ENCODE measurements at regions of chr6 and their contacts with region 1.

Region 1: GRCh38 chr6:56451165-56451739 is 191.4 kb downstream of the DST start:
- DNase-seq: peak in 1 of 3 donors; percentile 6
- ATAC-seq: no peak
- H3K4me3 ChIP-seq: no peak overlapping the region
- H3K4me1 ChIP-seq: no peaks in the 10 kb centered on the region
- CTCF ChIP-seq: no peak

Region 2: DNA sequence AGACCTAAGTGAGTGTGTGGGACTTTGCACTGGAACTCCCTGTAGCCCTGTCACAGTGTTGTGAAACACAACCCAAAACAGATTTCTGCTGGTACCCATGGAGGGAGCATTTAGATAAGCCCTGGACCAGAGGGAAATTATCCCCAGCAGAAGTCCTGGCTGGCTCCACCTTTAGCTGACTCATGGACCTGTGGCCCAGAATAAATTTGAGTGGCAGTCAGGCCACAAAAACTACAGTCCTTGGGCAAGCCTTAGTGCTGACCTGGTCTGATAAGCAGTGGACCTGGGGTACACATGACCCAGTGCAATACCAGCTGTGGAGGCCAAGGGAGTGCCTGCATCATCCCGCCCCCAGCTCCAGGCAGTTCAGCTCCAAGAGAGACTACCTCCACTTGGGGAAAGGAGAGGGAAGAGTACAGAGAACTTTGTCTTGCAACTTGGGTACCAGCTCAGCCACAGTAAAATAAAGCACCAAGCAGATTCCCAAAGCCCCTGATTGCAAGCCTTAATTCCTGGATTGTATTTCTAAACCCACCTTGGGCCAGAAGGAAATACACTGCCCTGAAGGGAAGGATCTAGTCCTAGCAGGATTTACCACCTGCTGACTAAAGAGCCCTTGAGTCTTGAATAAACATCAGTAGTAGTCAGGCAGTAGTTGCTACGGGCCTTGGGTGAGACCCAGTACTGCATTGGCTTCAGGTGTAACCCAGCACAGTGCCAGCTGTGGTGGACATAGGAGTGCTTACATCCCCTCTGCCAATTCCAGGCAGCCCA is 63.4 kb before region 1 on chr6:
- intact Hi-C with region 1: loop called in 1 of 2 experiments (anchors 2 kb)
- DNase-seq: no peak
- ATAC-seq: no peak
- H3K4me3 ChIP-seq: no peak overlapping the region
- H3K4me1 ChIP-seq: no peaks in the 10 kb centered on the region
- CTCF ChIP-seq: no peak

Region 3: GRCh38 chr6:56827908-56828649 is 376.8 kb after region 1 on chr6:
- intact Hi-C with region 1: no loop called
- DNase-seq: no peak
- ATAC-seq: no peak
- H3K4me3 ChIP-seq: no peak overlapping the region
- H3K4me1 ChIP-seq: no peaks in the 10 kb centered on the region
- CTCF ChIP-seq: no peak

Region 4: GRCh38 chr6:57040009-57040408 is 588.8 kb after region 1 on chr6:
- intact Hi-C with region 1: no loop called
- DNase-seq: no peak
- ATAC-seq: no peak
- H3K4me3 ChIP-seq: no peak overlapping the region
- H3K4me1 ChIP-seq: no peaks in the 10 kb centered on the region
- CTCF ChIP-seq: no peak